ENCODE measurements at regions of chr3 and their contacts with region 1.

Region 1: GRCh38 chr3:52001443-52001974 is 5.8 kb upstream of the RPL29 start:
- DNase-seq: peak; percentile 70
- H3K4me3 ChIP-seq: no peak overlapping the region
- H3K27ac ChIP-seq: no peak overlapping the region
- H3K4me1 ChIP-seq: peaks cover 13% of the 10 kb centered on the region
- H3K27me3 ChIP-seq: no peaks in the 10 kb centered on the region
- CTCF ChIP-seq: peak; percentile 94 to 97
- POLR2A ChIP-seq: no peak

Region 2: DNA sequence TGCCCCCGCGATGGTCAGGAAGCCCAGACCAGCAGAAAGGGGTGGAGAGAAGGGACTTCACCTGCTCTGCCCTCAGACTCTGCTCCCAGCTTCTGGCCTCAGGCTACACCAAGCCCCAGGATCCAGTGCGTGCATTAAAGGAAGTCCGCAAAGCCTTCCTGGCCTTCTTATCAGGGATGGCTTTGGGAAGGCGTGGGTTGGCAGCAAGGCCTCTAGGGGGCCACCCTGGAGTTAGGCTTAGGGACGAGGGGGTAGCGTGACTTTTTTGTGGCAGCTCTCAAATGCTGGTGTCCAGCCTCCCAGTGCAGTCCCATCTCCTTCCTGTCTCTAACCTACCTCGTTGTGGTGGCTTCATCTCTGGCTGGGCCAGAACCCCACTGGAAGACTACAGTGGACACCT is 13.1 kb after region 1 on chr3:
- CTCF ChIA-PET with region 1: interaction called, 29 read pairs
- POLR2A ChIA-PET with region 1: no interaction called
- dilution Hi-C with region 1: no loop called
- intact Hi-C with region 1: no loop called
- DNase-seq: no peak
- H3K4me3 ChIP-seq: no peak overlapping the region
- H3K27ac ChIP-seq: no peak overlapping the region
- H3K4me1 ChIP-seq: peaks cover 11% of the 10 kb centered on the region
- H3K27me3 ChIP-seq: no peaks in the 10 kb centered on the region
- CTCF ChIP-seq: peak; percentile 33 to 39
- POLR2A ChIP-seq: no peak

Region 3: DNA sequence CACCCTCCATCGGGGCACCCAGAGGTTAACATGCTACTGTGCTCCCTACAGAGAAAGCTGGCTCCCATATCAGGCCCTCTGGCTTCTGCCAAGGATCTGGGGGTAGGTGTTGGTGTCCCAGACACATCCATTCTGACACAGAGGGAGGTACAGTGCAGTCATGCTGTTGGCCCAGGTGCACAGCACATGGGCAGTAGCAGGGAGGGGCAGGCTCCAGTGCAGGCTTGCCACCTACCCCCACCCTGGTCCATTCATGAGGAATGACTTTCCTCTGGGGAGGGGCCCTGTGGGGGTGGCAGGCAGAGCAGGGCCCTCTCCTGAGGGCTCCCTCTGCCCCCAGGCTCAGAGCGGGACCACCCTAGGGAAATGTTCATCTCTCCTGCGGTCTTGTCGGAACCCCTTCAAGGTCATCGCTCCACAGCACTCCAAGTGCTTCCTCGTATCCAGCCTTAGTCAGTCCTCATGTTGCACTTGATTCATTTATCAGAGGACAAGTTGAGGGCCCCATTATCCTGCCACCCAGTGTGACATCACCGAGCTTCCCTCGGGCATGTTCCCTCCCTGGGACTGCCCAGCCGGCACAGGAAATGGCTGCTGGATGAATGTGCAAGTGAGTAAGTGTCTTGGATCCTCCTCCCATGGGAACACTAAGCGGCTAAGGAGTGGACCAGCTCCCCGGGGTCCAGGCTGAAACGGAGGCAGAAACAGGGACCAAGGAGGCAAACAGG is 44.8 kb after region 1 on chr3:
- CTCF ChIA-PET with region 1: interaction called, 260 read pairs
- POLR2A ChIA-PET with region 1: no interaction called
- dilution Hi-C with region 1: no loop called
- intact Hi-C with region 1: loop called (anchors 2 kb)
- DNase-seq: peak; percentile 96
- H3K4me3 ChIP-seq: no peak overlapping the region
- H3K27ac ChIP-seq: peak overlapping the region; percentile 86
- H3K4me1 ChIP-seq: peaks cover 28% of the 10 kb centered on the region
- H3K27me3 ChIP-seq: no peaks in the 10 kb centered on the region
- CTCF ChIP-seq: no peak
- POLR2A ChIP-seq: peak; percentile 75

Region 4: GRCh38 chr3:52123106-52123725 is 121.7 kb after region 1 on chr3:
- CTCF ChIA-PET with region 1: interaction called, 147 read pairs
- POLR2A ChIA-PET with region 1: interaction called, 3 read pairs
- dilution Hi-C with region 1: no loop called
- intact Hi-C with region 1: loop called (anchors 1 kb)
- DNase-seq: peak; percentile 81
- H3K4me3 ChIP-seq: no peak overlapping the region
- H3K27ac ChIP-seq: no peak overlapping the region
- H3K4me1 ChIP-seq: peaks cover 16% of the 10 kb centered on the region
- H3K27me3 ChIP-seq: no peaks in the 10 kb centered on the region
- CTCF ChIP-seq: peak; percentile 97 to 98
- POLR2A ChIP-seq: no peak

Region 5: GRCh38 chr3:52144034-52144795 is 142.7 kb after region 1 on chr3:
- CTCF ChIA-PET with region 1: interaction called, 139 read pairs
- POLR2A ChIA-PET with region 1: no interaction called
- dilution Hi-C with region 1: loop called (anchors 10 kb)
- intact Hi-C with region 1: loop called (anchors 1 kb)
- DNase-seq: peak; percentile 63
- H3K4me3 ChIP-seq: no peak overlapping the region
- H3K27ac ChIP-seq: no peak overlapping the region
- H3K4me1 ChIP-seq: no peaks in the 10 kb centered on the region
- H3K27me3 ChIP-seq: no peaks in the 10 kb centered on the region
- CTCF ChIP-seq: peak; percentile 93 to 94
- POLR2A ChIP-seq: no peak

Region 6: DNA sequence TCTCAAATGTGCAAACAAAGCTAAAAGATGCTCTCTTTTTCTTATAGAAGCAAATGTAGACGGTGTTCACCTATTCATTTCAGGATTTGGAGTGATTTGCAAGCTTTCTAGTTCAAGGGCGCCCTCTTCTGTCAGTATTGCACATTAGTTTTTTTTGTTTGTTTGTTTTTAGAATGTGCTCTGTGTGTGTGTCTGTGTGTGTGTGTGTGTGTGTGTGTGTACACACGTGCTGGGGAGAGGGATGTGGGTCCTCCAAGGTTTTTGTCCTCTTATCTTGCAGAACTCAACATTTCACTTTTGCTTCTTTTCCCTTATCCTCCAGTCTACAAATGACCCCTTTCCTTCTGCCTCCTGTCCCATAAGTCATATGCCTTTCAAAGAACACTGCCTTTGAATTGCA is 338.1 kb after region 1 on chr3:
- CTCF ChIA-PET with region 1: interaction called, 4 read pairs
- POLR2A ChIA-PET with region 1: no interaction called
- dilution Hi-C with region 1: no loop called
- intact Hi-C with region 1: loop called (anchors 1 kb)
- DNase-seq: peak; percentile 74
- H3K4me3 ChIP-seq: no peak overlapping the region
- H3K27ac ChIP-seq: no peak overlapping the region
- H3K4me1 ChIP-seq: no peaks in the 10 kb centered on the region
- H3K27me3 ChIP-seq: no peaks in the 10 kb centered on the region
- CTCF ChIP-seq: peak; percentile 48 to 50
- POLR2A ChIP-seq: no peak